ENCODE measurements at regions of chr1 and their contacts with region 1.

Region 1: GRCh38 chr1:214281021-214281719 is at the start of gene SMYD2:
- DNase-seq: peak; percentile 85
- ATAC-seq: peak; percentile 72
- total RNA-seq, gene SMYD2: 205 TPM

Region 2: GRCh38 chr1:214316593-214316992 is 35.4 kb after region 1 on chr1:
- intact Hi-C with region 1: loop called (anchors 5 kb)
- DNase-seq: no peak
- ATAC-seq: peak; percentile 68

Measured in Right ventricle myocardium inferior (tissue), 1 donor.